Breast epithelium (tissue), 4 donors: ENCODE measurements at regions of chr5 and their contacts with region 1.

Region 1: DNA sequence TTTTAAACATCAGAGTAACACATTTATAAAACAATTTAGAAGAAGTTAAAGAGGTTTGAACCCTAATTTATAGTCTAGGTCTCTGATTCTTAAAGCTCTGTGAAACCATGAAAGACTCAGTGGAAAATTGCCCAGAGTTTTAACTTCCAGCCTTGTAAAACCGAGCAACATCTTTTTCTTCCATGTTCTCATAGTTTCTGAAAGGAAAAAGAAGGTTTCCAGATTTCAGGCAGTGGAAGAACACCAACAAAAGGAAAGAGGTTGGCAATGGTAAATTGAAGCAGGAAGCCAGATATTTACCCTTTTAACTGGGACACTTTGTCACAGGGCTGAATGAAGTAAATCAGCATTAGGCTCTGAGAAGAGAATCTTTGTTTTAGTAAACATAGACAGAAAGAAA is 1999.3 kb downstream of the MAT2B start:
- DNase-seq: no peak
- H3K4me3 ChIP-seq: no peak overlapping the region
- H3K27ac ChIP-seq: no peak overlapping the region
- H3K4me1 ChIP-seq: no peaks in the 10 kb centered on the region
- H3K27me3 ChIP-seq: no peaks in the 10 kb centered on the region
- CTCF ChIP-seq: no peak
- POLR2A ChIP-seq: no peak

Region 2: DNA sequence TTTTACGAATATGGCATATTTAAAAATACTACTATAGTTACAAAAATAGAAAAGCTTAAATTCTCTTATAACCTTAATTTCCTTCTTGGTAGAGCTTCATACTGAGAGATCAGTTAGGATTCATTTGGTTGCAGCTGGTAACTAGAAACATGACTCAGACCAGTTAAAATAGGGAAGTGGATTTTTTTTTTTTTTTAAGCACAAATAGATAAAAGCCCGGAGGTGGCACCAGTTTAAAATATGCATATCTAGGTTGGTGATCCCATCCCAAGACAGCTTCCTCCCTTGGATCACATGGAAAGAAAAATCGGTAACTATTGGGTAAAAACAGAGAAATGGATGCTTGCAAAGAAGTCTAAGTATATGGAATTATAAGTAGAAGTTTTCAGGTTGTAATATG is 365.0 kb before region 1 on chr5:
- intact Hi-C with region 1: no loop called
- DNase-seq: no peak
- H3K4me3 ChIP-seq: no peak overlapping the region
- H3K27ac ChIP-seq: no peak overlapping the region
- H3K4me1 ChIP-seq: no peaks in the 10 kb centered on the region
- H3K27me3 ChIP-seq: no peaks in the 10 kb centered on the region
- CTCF ChIP-seq: no peak
- POLR2A ChIP-seq: no peak

Region 3: GRCh38 chr5:165538065-165538464 is 33.4 kb after region 1 on chr5:
- intact Hi-C with region 1: loop called (anchors 2 kb)
- DNase-seq: no peak
- H3K4me3 ChIP-seq: no peak overlapping the region
- H3K27ac ChIP-seq: no peak overlapping the region
- H3K4me1 ChIP-seq: no peaks in the 10 kb centered on the region
- H3K27me3 ChIP-seq: no peaks in the 10 kb centered on the region
- CTCF ChIP-seq: no peak
- POLR2A ChIP-seq: no peak